IMR-90 (cell line): ENCODE measurements at regions of chr1 and their contacts with region 1.

Region 1: DNA sequence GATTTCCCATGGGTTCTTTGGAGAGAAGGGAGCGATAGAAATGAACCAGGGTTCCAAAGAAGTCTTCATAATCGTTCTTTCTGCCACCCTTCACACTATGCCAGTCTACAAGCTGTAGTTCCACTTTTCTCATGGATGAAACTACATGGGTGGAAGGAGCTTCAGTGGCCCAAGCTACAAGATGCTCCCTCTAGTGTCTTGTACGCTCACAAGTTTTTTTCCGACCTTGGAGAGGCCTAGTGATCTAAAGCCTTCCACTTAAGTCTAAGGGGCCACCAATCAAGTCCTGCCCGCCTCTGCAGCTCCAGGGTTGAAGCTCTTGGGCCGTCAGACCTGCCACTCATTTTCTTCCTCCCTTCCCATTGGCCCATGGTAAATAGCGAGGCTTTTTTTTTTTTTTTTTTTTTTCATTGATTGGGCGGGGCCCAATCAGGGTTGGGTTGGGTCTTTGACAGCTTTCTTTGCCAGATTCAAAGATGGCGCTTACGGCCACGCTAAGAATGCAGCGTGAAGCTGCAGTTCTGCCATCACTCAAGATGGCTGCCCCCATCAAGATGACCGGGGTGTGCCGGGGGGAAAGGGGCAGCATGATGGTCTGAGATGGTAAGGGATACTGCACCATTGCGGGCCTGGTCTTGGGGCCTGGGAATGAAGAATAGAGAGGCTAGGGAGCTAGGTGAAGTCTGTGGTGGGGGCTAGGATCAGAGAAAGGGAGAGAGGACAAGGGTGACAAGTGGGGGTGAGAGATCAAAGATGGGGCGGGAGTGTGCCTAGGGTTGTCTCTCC is at the start of gene TOMM40L:
- DNase-seq: peak; percentile 100
- ATAC-seq: peak; percentile 95
- H3K4me3 ChIP-seq: peak within 1 kb of the TSS; percentile 74
- H3K27ac ChIP-seq: peak within 1 kb of the TSS; percentile 68
- H3K4me1 ChIP-seq: peaks cover 9% of the 10 kb centered on the region; the same call in 1 of the 2 replicates
- H3K27me3 ChIP-seq: no peaks in the 10 kb centered on the region; the same call in 1 of the 2 replicates
- CTCF ChIP-seq: peak; percentile 70
- POLR2A ChIP-seq: no peak
- RAD21 ChIP-seq: peak; percentile 63
- total RNA-seq, gene TOMM40L: 11.4 and 12.5 TPM in 2 replicates

Region 2: DNA sequence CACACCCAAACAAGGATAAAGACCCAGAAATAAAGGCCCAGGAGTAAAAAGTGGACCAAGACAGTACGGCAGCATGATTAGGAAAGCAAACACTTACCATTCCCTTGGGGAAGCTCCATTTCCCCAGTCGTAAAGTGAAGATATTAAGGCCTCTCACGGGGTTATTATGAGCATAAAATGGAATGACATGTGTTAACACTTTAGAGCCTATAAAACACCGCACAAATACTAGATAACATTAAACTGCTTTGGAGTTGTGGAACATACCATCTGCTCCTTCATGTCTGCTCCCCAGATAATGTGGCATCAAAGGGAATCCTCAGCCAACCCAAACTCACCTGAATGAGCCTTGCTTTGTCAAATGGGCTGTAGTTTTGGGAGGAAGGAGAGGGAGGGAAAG is 262.2 kb before region 1 on chr1:
- CTCF ChIA-PET with region 1: no interaction called
- POLR2A ChIA-PET with region 1: no interaction called
- dilution Hi-C with region 1: no loop called
- in situ Hi-C with region 1: no loop called
- intact Hi-C with region 1: no loop called
- DNase-seq: no peak
- ATAC-seq: no peak
- H3K4me3 ChIP-seq: no peak overlapping the region
- H3K27ac ChIP-seq: no peak overlapping the region
- H3K4me1 ChIP-seq: no peaks in the 10 kb centered on the region
- H3K27me3 ChIP-seq: no peaks in the 10 kb centered on the region
- CTCF ChIP-seq: no peak
- POLR2A ChIP-seq: no peak
- RAD21 ChIP-seq: no peak

Region 3: GRCh38 chr1:161192476-161193465 is 33.0 kb before region 1 on chr1:
- CTCF ChIA-PET with region 1: interaction called, 8 read pairs
- POLR2A ChIA-PET with region 1: no interaction called
- dilution Hi-C with region 1: no loop called
- in situ Hi-C with region 1: no loop called
- intact Hi-C with region 1: loop called (anchors 1 kb)
- DNase-seq: peak; percentile 65
- ATAC-seq: peak; percentile 92
- H3K4me3 ChIP-seq: no peak overlapping the region
- H3K27ac ChIP-seq: no peak overlapping the region
- H3K4me1 ChIP-seq: peaks cover 11% of the 10 kb centered on the region
- H3K27me3 ChIP-seq: no peaks in the 10 kb centered on the region
- CTCF ChIP-seq: peak; percentile 91
- POLR2A ChIP-seq: no peak
- RAD21 ChIP-seq: peak; percentile 80

Region 4: DNA sequence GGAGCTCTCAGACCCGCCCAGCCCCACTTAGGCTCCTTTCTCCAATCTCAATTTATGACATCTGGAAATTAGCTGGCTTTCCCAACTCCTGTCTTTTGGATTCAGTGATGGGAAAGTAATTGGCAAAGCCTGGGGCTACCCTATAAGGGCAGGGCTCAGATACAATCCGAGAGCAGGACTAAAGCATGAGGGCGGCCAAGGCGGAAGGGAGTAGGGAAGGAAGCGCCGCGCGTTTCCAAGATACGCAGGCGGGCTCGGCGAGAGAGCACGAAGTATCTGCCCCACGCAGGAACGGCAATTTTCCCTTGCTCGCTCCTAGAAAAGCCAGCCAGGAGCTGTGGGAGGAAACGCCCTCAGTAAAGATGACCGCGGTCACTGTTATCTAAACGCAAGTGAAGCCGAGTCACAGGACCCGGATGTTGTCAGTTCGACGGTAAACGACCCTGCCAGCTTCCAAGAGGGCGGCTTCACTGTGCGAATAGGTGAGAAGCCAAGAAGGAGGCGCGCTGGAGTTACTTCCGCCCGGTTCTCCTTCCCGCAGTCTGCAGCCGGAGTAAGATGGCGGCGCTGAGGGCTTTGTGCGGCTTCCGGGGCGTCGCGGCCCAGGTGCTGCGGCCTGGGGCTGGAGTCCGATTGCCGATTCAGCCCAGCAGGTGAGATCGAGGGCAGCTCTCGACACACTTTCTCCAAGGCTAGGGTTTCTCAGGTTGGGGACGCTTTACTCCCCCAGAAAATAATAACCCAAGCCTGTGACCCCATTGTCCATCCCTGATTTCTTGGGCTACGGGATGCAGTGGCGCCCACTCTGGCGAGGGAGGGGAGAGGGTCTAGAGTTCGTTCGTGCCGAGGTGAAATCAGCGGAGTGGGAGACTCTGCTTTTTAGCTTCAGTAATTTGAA is 23.6 kb before region 1 on chr1 and contains the start of gene NDUFS2:
- CTCF ChIA-PET with region 1: interaction called, 19 read pairs
- POLR2A ChIA-PET with region 1: interaction called, 4 read pairs
- dilution Hi-C with region 1: no loop called
- in situ Hi-C with region 1: no loop called
- intact Hi-C with region 1: no loop called
- DNase-seq: peak; percentile 99
- ATAC-seq: peak; percentile 87
- H3K4me3 ChIP-seq: peak within 1 kb of the TSS; percentile 76
- H3K27ac ChIP-seq: peak within 1 kb of the TSS; percentile 88
- H3K4me1 ChIP-seq: peaks cover 33% of the 10 kb centered on the region
- H3K27me3 ChIP-seq: no peaks in the 10 kb centered on the region
- CTCF ChIP-seq: no peak; the same call in 1 of the 2 replicates
- POLR2A ChIP-seq: peak; percentile 88
- RAD21 ChIP-seq: no peak
- total RNA-seq, gene NDUFS2: 85.5 and 122 TPM in 2 replicates

Region 5: DNA sequence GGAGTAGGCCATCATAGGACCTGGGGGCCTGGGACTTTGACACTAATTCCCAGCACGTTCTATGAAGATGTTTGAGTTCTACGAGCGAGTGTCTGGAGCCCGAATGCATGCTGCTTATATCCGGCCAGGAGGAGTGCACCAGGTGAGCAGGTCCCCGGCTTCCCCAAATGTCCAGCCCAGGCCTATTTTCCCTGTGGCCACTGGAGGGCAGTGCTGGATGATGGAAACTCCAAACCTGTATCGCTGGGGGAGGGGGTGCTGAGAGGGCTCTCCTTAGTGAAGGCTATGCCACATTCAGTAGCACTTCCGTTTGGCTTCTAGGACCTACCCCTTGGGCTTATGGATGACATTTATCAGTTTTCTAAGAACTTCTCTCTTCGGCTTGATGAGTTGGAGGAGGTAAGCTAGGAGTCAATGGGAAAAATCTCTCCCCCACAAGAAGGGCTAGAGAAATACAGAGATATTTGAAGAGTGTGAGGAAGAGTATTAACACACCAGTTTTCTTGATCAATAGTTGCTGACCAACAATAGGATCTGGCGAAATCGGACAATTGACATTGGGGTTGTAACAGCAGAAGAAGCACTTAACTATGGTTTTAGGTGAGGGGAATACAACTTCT is 15.8 kb before region 1 on chr1:
- CTCF ChIA-PET with region 1: interaction called, 20 read pairs
- POLR2A ChIA-PET with region 1: no interaction called
- dilution Hi-C with region 1: no loop called
- in situ Hi-C with region 1: no loop called
- intact Hi-C with region 1: no loop called
- DNase-seq: peak; percentile 67
- ATAC-seq: peak; percentile 87
- H3K4me3 ChIP-seq: no peak overlapping the region
- H3K27ac ChIP-seq: no peak overlapping the region
- H3K4me1 ChIP-seq: peaks cover 11% of the 10 kb centered on the region
- H3K27me3 ChIP-seq: no peaks in the 10 kb centered on the region
- CTCF ChIP-seq: peak; percentile 91
- POLR2A ChIP-seq: 0 out of 2 replicates have a peak, but pooled peaks have one; percentile 46
- RAD21 ChIP-seq: peak; percentile 88

Region 6: GRCh38 chr1:161292631-161293030 is 66.9 kb after region 1 on chr1:
- CTCF ChIA-PET with region 1: interaction called, 9 read pairs
- POLR2A ChIA-PET with region 1: interaction called, 7 read pairs
- dilution Hi-C with region 1: no loop called
- in situ Hi-C with region 1: loop called (anchors 5 kb)
- intact Hi-C with region 1: loop called (anchors 1 kb)
- DNase-seq: no peak
- ATAC-seq: no peak
- H3K4me3 ChIP-seq: no peak overlapping the region
- H3K27ac ChIP-seq: no peak overlapping the region
- H3K4me1 ChIP-seq: no peaks in the 10 kb centered on the region
- H3K27me3 ChIP-seq: peaks cover 2% of the 10 kb centered on the region
- CTCF ChIP-seq: no peak
- POLR2A ChIP-seq: no peak
- RAD21 ChIP-seq: no peak

Region 7: DNA sequence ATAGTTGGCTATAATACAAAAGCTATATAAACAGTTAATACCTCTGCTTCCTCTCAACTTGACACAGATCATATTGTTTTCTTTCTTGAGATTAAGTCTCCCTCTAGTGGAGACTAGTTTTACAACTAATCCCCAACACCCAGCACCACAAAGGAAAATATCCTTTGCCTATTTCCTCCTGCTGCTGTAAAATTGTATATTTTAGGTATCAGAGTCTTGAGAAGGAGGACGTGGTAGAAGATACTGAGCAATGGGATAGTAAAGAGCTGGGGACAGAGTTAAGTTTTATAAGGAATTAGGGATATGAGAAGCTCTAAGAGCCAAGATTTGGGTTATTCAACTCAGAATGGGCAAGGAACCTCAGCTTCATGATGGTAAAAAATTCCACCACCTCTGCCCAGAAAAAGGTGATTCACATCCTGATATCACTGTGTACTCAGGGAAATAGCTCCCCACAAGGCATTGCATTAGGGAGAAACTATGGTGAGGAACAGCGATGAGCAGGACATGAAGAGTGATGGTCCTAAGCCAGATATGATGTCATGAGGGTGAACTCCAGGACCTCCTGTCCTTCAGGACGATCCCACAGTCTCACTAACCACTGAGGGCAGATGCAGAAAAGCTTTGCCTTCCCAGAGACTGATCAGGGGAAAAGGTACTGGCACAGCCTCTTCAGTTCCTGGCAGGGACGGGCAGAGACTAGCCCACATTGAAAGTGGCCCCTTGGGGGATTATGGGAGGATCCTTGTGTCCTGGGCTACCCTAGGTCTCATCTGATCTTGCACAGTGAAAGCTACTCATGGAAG is 156.7 kb after region 1 on chr1:
- CTCF ChIA-PET with region 1: interaction called, 21 read pairs
- POLR2A ChIA-PET with region 1: no interaction called
- dilution Hi-C with region 1: no loop called
- in situ Hi-C with region 1: loop called (anchors 5 kb)
- intact Hi-C with region 1: loop called (anchors 1 kb)
- DNase-seq: peak; percentile 81
- ATAC-seq: peak; percentile 93
- H3K4me3 ChIP-seq: no peak overlapping the region
- H3K27ac ChIP-seq: no peak overlapping the region
- H3K4me1 ChIP-seq: no peaks in the 10 kb centered on the region
- H3K27me3 ChIP-seq: no peaks in the 10 kb centered on the region
- CTCF ChIP-seq: peak; percentile 69
- POLR2A ChIP-seq: no peak
- RAD21 ChIP-seq: peak; percentile 62

Region 8: DNA sequence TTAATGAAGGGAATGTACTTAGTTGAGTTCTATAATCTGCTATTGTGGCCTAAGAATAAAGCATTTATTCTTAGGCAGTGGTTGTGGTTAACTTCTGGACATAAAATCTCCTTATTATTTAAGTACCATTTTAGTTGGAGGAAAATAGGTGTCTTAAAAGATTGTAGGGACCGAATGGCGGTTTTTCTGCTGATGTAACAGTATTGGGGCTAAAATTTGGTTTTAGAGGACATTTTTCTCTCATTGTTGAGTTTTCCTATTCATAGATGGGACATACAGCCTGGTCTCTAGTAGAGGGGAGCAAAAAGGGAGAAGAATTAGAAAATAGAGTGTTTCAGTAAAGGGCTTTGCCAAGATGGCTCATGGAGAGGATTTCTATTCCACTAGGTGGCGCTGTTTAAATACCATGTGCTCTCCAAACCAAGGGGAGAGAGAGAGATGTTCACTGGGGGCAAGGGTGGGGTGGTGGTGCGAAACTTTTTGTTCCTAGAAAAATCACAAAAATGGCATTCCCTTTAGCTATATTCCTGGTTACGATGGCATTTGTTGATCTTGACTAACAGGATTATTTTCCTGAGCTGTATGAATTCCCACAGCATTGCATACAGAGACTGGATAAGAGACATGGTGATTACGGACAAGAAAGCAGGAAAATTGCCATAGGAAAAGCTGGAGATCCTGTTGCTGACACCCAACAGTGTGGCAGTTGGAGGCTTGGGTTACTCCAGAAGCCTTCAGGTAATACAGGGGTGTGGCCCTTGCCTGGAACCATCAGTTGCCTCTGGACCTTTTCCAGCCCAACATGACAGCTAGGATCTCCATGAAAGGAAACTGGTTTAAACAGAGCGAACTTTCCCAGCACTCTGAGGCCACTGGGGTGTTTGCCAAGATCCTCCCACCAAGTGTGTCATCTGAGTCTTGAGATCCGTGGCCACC is 261.3 kb after region 1 on chr1:
- CTCF ChIA-PET with region 1: no interaction called
- POLR2A ChIA-PET with region 1: no interaction called
- dilution Hi-C with region 1: no loop called
- in situ Hi-C with region 1: no loop called
- intact Hi-C with region 1: no loop called
- DNase-seq: peak; percentile 74
- ATAC-seq: peak; percentile 70
- H3K4me3 ChIP-seq: peak overlapping the region; percentile 37; the same call in 1 of the 2 replicates
- H3K27ac ChIP-seq: no peak overlapping the region
- H3K4me1 ChIP-seq: peaks cover 2% of the 10 kb centered on the region; the same call in 1 of the 2 replicates
- H3K27me3 ChIP-seq: peaks cover 22% of the 10 kb centered on the region
- CTCF ChIP-seq: peak; percentile 77
- POLR2A ChIP-seq: no peak
- RAD21 ChIP-seq: peak; percentile 68